ENCODE measurements at regions of chr5 and their contacts with region 1.

Region 1: GRCh38 chr5:180291943-180292831 is at the start of gene MAPK9:
- DNase-seq: peak; percentile 91
- ATAC-seq: peak; percentile 85
- H3K4me3 Mint-ChIP-seq: peak within 1 kb of the TSS; percentile 91
- H3K27ac Mint-ChIP-seq: peak within 1 kb of the TSS; percentile 93
- H3K4me1 Mint-ChIP-seq: peaks cover 37% of the 10 kb centered on the region
- H3K27me3 Mint-ChIP-seq: no peaks in the 10 kb centered on the region
- total RNA-seq, gene MAPK9: 37.0 to 38.1 TPM

Region 2: GRCh38 chr5:179623003-179623880 is 668.9 kb before region 1 on chr5 and contains the start of gene HNRNPH1:
- CTCF ChIA-PET with region 1: no interaction called
- POLR2A ChIA-PET with region 1: no interaction called
- intact Hi-C with region 1: loop called in 1 of 2 experiments (anchors 2 kb)
- DNase-seq: peak; percentile 99
- ATAC-seq: peak; percentile 79
- H3K4me3 Mint-ChIP-seq: peak within 1 kb of the TSS; percentile 94
- H3K27ac Mint-ChIP-seq: peak within 1 kb of the TSS; percentile 100
- H3K4me1 Mint-ChIP-seq: peaks cover 37% of the 10 kb centered on the region
- H3K27me3 Mint-ChIP-seq: no peaks in the 10 kb centered on the region
- total RNA-seq, gene HNRNPH1: 634 to 659 TPM

Region 3: GRCh38 chr5:179858586-179859427 is 433.4 kb before region 1 on chr5 and contains the start of gene MRNIP:
- CTCF ChIA-PET with region 1: no interaction called
- POLR2A ChIA-PET with region 1: no interaction called
- intact Hi-C with region 1: loop called in 1 of 2 experiments (anchors 1 kb)
- DNase-seq: peak; percentile 95
- ATAC-seq: peak; percentile 98
- H3K4me3 Mint-ChIP-seq: peak within 1 kb of the TSS; percentile 84
- H3K27ac Mint-ChIP-seq: peak within 1 kb of the TSS; percentile 85
- H3K4me1 Mint-ChIP-seq: peaks cover 6% of the 10 kb centered on the region
- H3K27me3 Mint-ChIP-seq: no peaks in the 10 kb centered on the region
- total RNA-seq, gene MRNIP: 19.4 to 19.7 TPM

Region 4: DNA sequence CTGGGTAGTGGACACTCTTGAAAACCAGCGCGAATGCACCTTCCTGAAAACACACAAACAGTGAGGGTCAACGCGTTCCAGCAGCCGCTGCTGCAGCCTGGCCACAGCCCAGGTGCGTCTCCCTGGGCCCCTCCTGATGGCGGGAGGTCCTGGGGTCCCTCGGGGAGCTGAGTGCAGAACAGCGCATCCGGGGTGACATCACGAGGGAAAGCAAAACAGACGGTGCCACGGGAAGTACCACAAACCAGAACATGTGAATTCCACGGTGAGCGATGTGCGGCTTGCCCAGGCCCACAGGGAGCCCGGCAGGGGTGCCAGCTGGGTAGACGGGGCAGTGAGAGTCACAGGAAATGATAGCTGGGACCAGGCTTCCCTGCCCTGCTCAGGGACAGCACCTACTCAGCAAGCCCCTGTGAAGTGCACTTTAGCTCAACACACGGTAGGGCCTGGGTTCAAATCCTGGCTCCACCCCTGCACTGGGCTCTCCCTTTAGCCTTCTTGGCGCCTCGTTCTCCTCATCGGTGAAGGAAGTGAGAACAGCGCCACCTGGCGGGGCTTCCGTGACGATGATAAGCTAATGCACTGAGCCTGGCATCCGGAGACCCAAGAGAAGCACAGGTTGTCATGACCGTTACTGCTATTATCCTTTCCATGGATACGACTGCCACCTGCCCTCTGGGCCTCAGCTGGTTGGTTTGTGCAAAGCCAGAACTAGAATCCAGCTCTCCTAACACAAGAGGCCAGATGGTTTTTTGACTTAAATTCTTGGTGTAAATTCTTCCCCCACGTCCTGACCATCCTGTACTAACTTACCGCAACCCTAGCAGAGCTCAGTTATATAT is 36.3 kb after region 1 on chr5:
- CTCF ChIA-PET with region 1: interaction called, 28 read pairs
- POLR2A ChIA-PET with region 1: no interaction called
- intact Hi-C with region 1: loop called (anchors 1 kb)
- DNase-seq: peak; percentile 93
- ATAC-seq: peak; percentile 98
- H3K4me3 Mint-ChIP-seq: no peak overlapping the region
- H3K27ac Mint-ChIP-seq: no peak overlapping the region
- H3K4me1 Mint-ChIP-seq: no peaks in the 10 kb centered on the region
- H3K27me3 Mint-ChIP-seq: peaks cover 9% of the 10 kb centered on the region

Region 5: GRCh38 chr5:180494060-180494509 is 201.9 kb after region 1 on chr5 and contains the start of gene CNOT6:
- CTCF ChIA-PET with region 1: no interaction called
- POLR2A ChIA-PET with region 1: no interaction called
- intact Hi-C with region 1: loop called in 1 of 2 experiments (anchors 1 kb)
- DNase-seq: peak; percentile 96
- ATAC-seq: peak; percentile 93
- H3K4me3 Mint-ChIP-seq: peak within 1 kb of the TSS; percentile 78
- H3K27ac Mint-ChIP-seq: peak within 1 kb of the TSS; percentile 87
- H3K4me1 Mint-ChIP-seq: peaks cover 32% of the 10 kb centered on the region
- H3K27me3 Mint-ChIP-seq: no peaks in the 10 kb centered on the region
- total RNA-seq, gene CNOT6: 34.4 to 43.2 TPM

Region 6: DNA sequence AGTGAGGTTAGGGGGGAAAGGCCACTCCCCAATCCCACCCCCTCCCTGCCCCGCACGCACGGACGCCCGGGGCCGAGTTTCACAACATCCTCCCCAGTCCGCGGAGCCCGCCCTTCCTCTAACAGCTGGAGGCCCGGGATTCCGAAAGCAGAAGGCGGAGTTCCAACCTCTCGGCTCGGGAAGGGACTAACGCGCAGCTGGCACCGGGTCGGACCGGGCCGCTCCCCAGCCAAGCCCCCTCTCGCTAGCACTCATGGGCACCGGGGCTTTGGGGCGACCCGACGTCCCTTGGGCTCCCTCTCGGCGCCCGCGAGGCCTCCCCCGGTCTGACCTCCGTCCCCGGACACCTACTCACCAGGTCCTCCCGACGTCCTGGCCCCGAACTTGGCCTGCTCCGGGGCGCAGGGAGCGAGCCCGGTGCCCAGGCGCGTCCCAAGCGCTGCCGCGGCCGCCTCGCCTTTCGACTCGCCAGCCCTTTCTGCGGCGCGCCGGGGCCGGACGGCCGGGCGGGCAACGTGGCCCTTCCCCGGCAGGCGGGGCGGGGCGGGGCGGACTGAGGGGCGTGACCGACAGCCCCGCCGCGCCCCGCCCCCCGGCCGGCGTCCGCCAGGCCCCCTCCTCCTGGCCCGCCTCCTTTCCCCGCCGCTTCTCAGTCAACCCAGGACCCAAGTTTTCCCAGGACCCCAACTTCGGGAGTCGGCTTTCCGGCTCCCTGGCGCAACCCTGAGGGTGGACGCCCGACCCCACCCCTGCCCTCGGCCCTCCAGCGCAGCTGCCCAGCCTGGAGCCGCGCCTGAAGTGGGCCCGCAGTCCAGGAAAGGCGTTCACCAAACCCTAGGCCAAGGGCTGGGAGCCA is 510.4 kb after region 1 on chr5 and contains the start of gene MGAT1:
- CTCF ChIA-PET with region 1: no interaction called
- POLR2A ChIA-PET with region 1: no interaction called
- intact Hi-C with region 1: loop called in 1 of 2 experiments (anchors 2 kb)
- DNase-seq: peak; percentile 90
- ATAC-seq: peak; percentile 46
- H3K4me3 Mint-ChIP-seq: peak within 1 kb of the TSS; percentile 91
- H3K27ac Mint-ChIP-seq: peak within 1 kb of the TSS; percentile 89
- H3K4me1 Mint-ChIP-seq: peaks cover 77% of the 10 kb centered on the region
- H3K27me3 Mint-ChIP-seq: no peaks in the 10 kb centered on the region
- total RNA-seq, gene MGAT1: 93.2 to 125 TPM

Region 7: GRCh38 chr5:181260387-181261319 is 968.5 kb after region 1 on chr5 and contains the start of gene TRIM52:
- CTCF ChIA-PET with region 1: no interaction called
- POLR2A ChIA-PET with region 1: no interaction called
- intact Hi-C with region 1: loop called in 1 of 2 experiments (anchors 1 kb)
- DNase-seq: peak; percentile 95
- ATAC-seq: peak; percentile 85
- H3K4me3 Mint-ChIP-seq: peak within 1 kb of the TSS; percentile 91
- H3K27ac Mint-ChIP-seq: peak within 1 kb of the TSS; percentile 95
- H3K4me1 Mint-ChIP-seq: peaks cover 38% of the 10 kb centered on the region
- H3K27me3 Mint-ChIP-seq: no peaks in the 10 kb centered on the region
- total RNA-seq, gene TRIM52: 10.4 to 13.1 TPM

Measured in activated CD4-positive, alpha-beta T cell treated with anti-CD3 and anti-CD28 coated beads for 36 hours (primary cell).